SK-N-SH (cell line): ENCODE measurements at regions of chr12 and their contacts with region 1.

Region 1: DNA sequence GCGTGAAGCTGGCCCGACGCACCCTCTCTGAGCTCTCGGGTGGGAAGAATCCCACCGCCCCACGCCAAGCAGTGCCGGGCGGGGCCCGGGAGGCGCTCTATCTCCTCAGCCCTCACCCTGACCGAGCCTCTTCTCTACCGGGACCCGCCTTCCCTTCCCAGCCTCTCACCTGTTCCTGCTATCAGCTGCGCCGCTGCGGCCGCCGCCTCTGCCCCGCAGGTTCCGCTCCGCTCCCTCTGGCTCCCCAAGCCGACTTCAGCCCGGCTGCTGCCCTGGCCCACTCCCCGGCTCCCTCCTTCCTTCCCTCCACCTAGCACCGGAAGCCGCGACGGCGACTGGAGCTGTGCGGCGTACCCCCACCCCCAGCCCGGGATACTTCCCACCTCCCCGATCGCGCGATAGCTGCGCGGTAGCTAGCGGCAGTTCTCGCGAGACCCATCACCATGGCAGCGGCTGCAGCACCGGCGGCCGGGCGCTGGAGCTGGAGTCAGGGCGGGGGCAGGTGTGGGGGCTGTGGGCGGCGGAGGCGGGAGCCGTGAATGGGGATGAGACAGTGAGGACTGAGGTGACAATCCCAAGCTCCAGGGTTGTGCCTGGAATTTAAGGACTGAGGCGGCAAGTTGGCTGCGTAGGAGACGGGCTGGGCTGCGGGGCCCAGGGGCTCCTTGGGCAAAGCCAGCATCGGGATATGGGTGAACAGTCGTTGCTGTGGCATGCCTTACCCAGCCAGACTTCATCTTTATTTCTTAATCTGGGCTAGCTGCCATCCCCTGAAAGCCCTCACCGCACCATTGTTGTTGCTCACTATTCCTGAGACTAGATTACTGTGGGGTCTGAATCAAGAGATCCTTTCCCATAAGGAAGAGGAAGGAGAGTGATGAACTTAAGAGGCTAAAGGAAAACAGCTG is at the start of gene ARF3:
- DNase-seq: peak; percentile 98
- H3K4me3 ChIP-seq: peak within 1 kb of the TSS; percentile 83 to 96
- H3K27ac ChIP-seq: peak within 1 kb of the TSS; percentile 87 to 90
- H3K4me1 ChIP-seq: peaks cover 7 to 16% of the 10 kb centered on the region in 2 experiments; a peak in 3 of 4 replicates
- H3K27me3 ChIP-seq: no peaks in the 10 kb centered on the region; the same call in 1 of the 2 replicates
- CTCF ChIP-seq: no peak
- EP300 ChIP-seq: no peak
- RAD21 ChIP-seq: no peak
- polyA plus RNA-seq, gene ARF3: 204 and 261 TPM in 2 replicates

Region 2: DNA sequence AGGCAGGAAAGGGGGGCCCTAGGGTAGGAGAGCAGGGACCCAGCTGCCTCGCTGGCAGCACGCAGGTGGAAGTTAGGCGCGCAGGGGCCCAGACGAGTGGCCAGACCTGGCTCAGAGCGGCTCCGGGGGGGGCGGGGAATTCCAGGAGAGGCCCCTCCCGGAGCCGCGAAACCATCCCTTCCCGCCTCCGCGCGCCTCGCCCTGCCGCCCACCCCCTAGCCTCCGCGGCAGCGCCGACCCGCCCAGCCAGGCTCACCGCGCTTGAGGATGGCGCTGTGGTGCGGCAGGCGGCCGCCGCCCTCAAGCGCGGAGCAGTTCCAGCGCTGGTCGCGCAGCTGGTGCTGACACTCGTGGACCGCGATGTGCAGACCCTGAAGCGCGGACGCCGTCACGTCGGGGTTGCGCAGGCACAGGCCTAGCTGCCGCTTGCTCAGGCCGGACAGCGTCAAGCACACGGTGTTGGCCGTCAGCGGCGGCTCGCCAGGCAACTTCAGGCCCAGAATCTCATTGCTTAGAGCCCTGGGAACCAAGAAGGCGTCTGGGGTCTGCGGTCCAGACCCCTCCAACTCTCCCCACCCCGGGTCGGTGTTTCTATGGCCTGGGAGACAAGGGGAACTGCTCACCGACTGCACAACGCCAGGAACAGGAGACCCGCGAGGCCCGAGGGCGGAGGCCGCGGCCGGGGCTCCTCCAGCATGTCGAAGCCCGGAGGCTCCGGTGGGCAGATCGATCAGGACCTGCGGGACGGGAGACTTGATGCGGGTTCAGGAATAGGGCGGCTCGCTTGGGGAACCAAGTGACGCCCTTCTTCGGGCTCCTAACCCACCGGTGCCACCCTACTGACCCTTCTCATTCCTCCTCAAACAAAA is 12.7 kb after region 1 on chr12:
- CTCF ChIA-PET with region 1: interaction called, 26 read pairs
- POLR2A ChIA-PET with region 1: no interaction called
- DNase-seq: peak; percentile 83
- H3K4me3 ChIP-seq: no peak overlapping the region; a peak in 1 of 4 replicates
- H3K27ac ChIP-seq: no peak overlapping the region
- H3K4me1 ChIP-seq: peaks cover 0 to 13% of the 10 kb centered on the region in 2 experiments; a peak in 1 of 4 replicates
- H3K27me3 ChIP-seq: peaks cover 40% of the 10 kb centered on the region; the same call in 1 of the 2 replicates
- CTCF ChIP-seq: no peak
- EP300 ChIP-seq: no peak
- RAD21 ChIP-seq: no peak

Region 3: DNA sequence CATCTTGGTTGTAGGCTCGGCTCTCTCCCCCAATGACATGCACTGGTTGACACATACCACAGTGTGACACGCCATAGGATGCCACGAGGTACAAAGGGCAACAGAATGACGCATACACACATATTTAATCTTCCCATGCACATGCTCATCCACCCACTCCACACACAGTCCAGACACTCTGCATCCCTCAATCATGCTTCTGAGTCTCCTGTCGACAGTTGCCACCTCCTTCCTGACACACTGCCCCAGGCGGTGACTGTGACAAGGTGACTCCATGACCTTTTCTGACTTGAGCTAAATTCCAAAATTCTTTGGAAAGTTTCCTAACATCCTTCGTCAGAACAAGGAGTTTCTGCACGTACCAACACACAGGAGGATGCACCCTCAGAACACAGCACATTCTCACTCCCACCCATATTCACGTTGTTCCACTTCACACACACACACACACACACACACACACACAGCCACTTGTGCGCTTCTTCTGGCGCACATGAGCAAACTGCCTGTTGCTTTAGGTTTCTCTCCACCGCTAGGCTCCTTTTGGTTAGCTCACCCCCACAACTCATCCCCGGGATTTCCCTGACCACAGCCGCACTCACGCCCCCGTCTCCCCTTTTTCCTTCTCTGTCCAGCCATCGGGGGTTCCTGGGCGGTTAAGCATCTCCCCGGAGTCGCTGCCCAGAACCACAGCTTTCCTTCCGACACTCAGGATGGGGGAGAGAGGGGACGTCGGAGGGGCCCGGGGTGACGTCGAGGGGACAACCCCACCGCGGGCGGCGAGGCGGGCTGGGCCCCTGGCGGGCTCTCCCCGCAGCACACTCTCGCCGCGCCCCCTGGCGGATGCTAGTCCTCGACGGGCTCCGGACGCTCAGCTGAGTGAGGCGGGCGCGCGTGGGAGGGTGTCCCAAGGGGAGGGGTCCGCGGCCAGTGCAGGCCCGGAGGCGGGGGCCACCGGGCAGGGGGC is 20.2 kb after region 1 on chr12:
- CTCF ChIA-PET with region 1: interaction called, 935 read pairs
- POLR2A ChIA-PET with region 1: no interaction called
- DNase-seq: peak; percentile 91
- H3K4me3 ChIP-seq: peak overlapping the region in 1 of 2 experiments; percentile 32; a peak in 1 of 4 replicates
- H3K27ac ChIP-seq: no peak overlapping the region
- H3K4me1 ChIP-seq: peaks cover 0 to 26% of the 10 kb centered on the region in 2 experiments; a peak in 1 of 4 replicates
- H3K27me3 ChIP-seq: peaks cover 66% of the 10 kb centered on the region
- CTCF ChIP-seq: peak; percentile 70
- EP300 ChIP-seq: no peak
- RAD21 ChIP-seq: peak; percentile 29; the same call in 1 of the 2 replicates

Region 4: DNA sequence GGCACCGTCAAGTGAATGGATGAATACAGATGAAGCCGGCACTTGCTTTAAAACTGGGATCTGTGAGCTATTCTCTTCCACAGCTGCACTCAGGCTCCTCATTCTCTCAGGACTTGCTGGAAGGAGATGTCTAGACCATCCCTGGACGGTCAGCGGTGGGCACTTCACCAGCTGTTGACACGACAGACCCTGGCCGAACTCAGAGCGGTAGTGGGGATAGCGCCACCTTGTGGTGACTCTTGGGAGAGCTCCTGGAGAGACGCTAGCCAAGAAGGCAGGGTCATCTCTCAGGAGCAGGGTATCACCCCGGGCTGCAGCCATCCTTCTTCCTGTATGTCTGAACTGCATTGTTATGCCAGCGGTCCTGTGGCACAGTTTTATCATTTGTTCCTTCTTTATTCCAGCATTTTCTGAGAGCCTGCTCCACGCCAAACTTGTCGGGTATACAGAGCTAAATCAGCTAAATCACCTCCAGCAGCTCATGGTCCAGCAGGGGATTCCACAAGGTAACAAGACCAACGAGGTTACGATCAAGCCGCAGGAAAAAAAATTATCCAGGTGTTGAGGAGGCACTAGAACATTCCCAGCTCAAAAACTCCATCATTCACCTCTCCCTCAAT is 30.7 kb after region 1 on chr12:
- CTCF ChIA-PET with region 1: interaction called, 935 read pairs
- POLR2A ChIA-PET with region 1: no interaction called
- DNase-seq: peak; percentile 87
- H3K4me3 ChIP-seq: no peak overlapping the region; a peak in 1 of 4 replicates
- H3K27ac ChIP-seq: no peak overlapping the region
- H3K4me1 ChIP-seq: no peaks in the 10 kb centered on the region
- H3K27me3 ChIP-seq: peaks cover 32% of the 10 kb centered on the region
- CTCF ChIP-seq: peak; percentile 88
- EP300 ChIP-seq: no peak
- RAD21 ChIP-seq: peak; percentile 49